Endothelial cell of umbilical vein (primary cell): ENCODE measurements at regions of chr11 and their contacts with region 1.

Region 1: DNA sequence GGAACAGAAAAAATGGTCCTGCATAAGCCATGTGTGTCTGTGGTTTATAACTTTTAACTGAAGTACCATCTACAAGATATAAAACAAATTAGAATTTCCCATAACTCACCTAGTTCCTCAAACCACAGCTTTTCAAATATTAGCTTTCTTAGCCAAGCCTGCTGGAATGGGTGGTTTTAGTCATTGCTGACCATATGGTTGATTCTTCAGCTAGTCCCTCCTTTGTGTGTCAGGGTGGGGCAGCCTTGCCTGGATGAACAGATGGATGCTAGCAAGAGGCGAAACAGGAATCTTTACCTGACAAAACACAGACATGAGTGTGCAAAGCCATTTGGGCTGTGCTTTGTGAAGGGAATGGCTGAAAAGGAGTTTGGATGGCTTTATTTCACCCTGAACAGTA is 6.9 kb upstream of the B3GNT6 start:
- DNase-seq: no peak
- H3K4me3 ChIP-seq: no peak overlapping the region
- H3K27ac ChIP-seq: no peak overlapping the region
- H3K4me1 ChIP-seq: no peaks in the 10 kb centered on the region
- H3K27me3 ChIP-seq: peaks cover 9 to 11% of the 10 kb centered on the region in 2 experiments
- CTCF ChIP-seq: no peak
- POLR2A ChIP-seq: no peak

Region 2: GRCh38 chr11:76131671-76132631 is 895.3 kb before region 1 on chr11:
- CTCF ChIA-PET with region 1: no interaction called
- POLR2A ChIA-PET with region 1: no interaction called
- dilution Hi-C with region 1: no loop called
- intact Hi-C with region 1: no loop called
- DNase-seq: peak; percentile 56
- H3K4me3 ChIP-seq: no peak overlapping the region
- H3K27ac ChIP-seq: no peak overlapping the region
- H3K4me1 ChIP-seq: peaks cover 2% of the 10 kb centered on the region
- H3K27me3 ChIP-seq: no peaks in the 10 kb centered on the region
- CTCF ChIP-seq: no peak
- POLR2A ChIP-seq: no peak

Region 3: DNA sequence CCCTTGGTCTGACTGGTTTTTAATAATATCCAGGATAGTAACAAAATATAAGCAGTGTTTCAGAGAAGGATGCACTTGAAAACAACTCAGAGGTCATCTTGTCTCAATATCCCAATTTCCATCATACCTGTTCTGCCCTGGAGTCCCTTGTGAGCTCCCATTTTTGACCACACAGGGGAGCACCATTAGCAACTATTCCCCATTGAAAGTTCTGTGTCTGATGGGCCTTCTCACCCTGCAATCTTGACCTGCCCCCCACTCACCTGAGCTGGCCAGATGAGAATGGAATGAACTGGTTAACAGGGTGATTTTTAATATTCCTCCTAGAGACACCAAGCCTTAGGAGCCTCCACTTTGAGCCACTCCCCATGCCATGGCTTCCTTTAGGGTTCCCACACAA is 35.7 kb after region 1 on chr11:
- CTCF ChIA-PET with region 1: no interaction called
- POLR2A ChIA-PET with region 1: no interaction called
- dilution Hi-C with region 1: no loop called
- intact Hi-C with region 1: no loop called
- DNase-seq: no peak
- H3K4me3 ChIP-seq: no peak overlapping the region
- H3K27ac ChIP-seq: no peak overlapping the region
- H3K4me1 ChIP-seq: peaks cover 11% of the 10 kb centered on the region
- H3K27me3 ChIP-seq: peaks cover 4 to 9% of the 10 kb centered on the region in 2 experiments
- CTCF ChIP-seq: no peak
- POLR2A ChIP-seq: no peak

Region 4: GRCh38 chr11:78170874-78171549 is 1143.7 kb after region 1 on chr11:
- CTCF ChIA-PET with region 1: no interaction called
- POLR2A ChIA-PET with region 1: no interaction called
- dilution Hi-C with region 1: no loop called
- intact Hi-C with region 1: loop called (anchors 5 kb)
- DNase-seq: no peak
- H3K4me3 ChIP-seq: no peak overlapping the region
- H3K27ac ChIP-seq: no peak overlapping the region
- H3K4me1 ChIP-seq: peaks cover 12% of the 10 kb centered on the region
- H3K27me3 ChIP-seq: no peaks in the 10 kb centered on the region
- CTCF ChIP-seq: no peak
- POLR2A ChIP-seq: no peak